Panc1 (cell line): ENCODE measurements at regions of chr2 and their contacts with region 1.

Region 1: DNA sequence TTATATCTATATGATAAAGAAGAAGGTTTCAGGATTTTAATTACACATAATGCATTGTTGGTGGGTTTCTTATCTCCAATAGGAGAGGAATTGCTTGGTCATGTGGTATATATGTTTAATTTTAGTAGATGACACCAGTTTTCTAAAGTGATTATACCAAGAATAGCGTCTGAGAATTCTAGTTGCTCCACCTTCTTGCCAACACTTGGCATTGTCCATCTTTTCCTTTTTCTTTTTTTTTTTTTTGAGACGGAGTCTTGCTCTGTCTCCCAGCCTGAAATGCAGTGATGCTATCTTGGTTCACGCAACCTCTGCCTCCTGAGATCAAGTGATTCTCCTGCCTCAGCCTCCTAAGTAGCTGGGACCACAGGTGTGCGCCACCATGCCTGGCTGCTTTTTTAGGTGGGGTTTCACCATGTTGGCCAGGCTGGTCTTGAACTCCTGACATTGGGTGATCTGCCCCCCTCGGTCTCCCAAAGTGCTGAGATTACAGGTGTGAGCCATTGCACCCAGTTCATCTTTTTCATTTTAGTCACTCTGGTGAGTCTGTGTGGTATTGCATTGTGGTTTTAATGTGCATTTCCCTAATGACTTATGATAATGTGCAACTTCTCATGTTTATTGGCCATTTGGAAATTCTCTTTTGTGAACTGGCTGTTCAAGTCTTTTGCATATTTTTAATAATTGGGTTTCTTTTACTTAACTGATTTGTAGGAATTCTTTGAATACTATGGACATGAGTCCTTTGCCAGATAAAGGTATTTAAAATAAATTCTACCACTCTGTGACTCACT is 37.3 kb upstream of the ZNF512 start:
- DNase-seq: no peak
- ATAC-seq: no peak
- H3K4me3 ChIP-seq: no peak overlapping the region
- H3K27ac ChIP-seq: no peak overlapping the region
- H3K4me1 ChIP-seq: no peaks in the 10 kb centered on the region
- H3K27me3 ChIP-seq: no peaks in the 10 kb centered on the region
- CTCF ChIP-seq: no peak

Region 2: DNA sequence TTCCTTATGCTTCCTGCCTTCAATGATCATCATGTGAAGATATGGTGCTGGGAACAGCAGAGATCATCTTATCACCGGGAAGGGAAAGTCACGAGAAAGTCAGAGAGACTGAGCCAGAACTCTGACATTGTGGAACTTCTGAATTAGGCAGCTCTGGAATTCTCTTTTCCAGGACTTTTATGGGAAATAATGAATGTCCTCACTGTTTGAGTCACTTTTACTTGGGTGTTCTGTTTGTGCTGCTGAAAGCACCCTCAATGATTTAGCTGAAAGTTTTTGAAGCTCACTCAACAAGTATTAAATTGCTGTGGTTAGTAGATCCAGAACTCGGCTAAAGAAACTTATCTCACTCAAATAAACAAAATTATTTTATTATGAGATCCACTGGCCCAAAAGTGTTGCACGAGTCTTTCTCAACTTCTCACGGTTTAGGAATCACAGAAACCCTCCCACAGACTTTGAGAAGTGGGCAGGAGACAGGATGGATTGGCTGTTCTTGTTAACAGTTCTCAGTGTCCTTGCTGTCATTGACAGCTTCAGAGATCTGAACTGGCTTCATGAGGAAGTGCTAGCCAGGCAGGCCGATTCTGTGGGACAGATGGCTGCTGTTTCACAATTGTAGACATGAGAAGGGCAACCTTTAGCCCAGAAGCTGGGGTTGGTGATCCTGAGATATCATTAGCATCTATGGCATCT is 360.1 kb before region 1 on chr2:
- CTCF ChIA-PET with region 1: no interaction called
- POLR2A ChIA-PET with region 1: no interaction called
- in situ Hi-C with region 1: no loop called
- intact Hi-C with region 1: no loop called
- DNase-seq: no peak
- ATAC-seq: no peak
- H3K4me3 ChIP-seq: no peak overlapping the region
- H3K27ac ChIP-seq: no peak overlapping the region
- H3K4me1 ChIP-seq: no peaks in the 10 kb centered on the region
- H3K27me3 ChIP-seq: no peaks in the 10 kb centered on the region
- CTCF ChIP-seq: no peak

Region 3: GRCh38 chr2:27501042-27501441 is 44.5 kb before region 1 on chr2:
- CTCF ChIA-PET with region 1: no interaction called
- POLR2A ChIA-PET with region 1: interaction called, 12 read pairs
- in situ Hi-C with region 1: no loop called
- intact Hi-C with region 1: no loop called
- DNase-seq: no peak
- ATAC-seq: no peak
- H3K4me3 ChIP-seq: no peak overlapping the region
- H3K27ac ChIP-seq: no peak overlapping the region
- H3K4me1 ChIP-seq: no peaks in the 10 kb centered on the region
- H3K27me3 ChIP-seq: peaks cover 20% of the 10 kb centered on the region; the same call in 1 of the 2 replicates
- CTCF ChIP-seq: no peak

Region 4: DNA sequence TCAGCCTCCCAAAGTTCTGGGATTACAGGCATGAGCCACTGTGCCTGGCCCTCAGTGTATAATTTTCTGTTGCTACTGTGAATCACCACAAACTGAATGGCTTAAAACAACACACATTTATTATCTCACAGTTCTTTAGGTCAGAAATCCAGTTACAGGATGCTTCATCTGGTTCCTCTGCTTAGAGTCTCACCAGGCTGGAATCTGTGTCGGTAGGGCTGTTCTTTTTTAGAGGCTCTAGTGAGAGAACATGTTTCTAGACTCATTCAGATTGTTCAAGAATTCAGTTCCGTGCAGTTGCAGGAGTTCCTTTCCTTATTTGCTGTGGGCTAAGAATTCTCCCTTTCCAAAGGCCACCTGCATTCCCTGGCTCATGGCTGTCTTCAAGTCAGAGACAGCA is 61.1 kb after region 1 on chr2:
- CTCF ChIA-PET with region 1: no interaction called
- POLR2A ChIA-PET with region 1: no interaction called
- in situ Hi-C with region 1: no loop called
- intact Hi-C with region 1: no loop called
- DNase-seq: no peak
- ATAC-seq: no peak
- H3K4me3 ChIP-seq: no peak overlapping the region
- H3K27ac ChIP-seq: no peak overlapping the region
- H3K4me1 ChIP-seq: no peaks in the 10 kb centered on the region
- H3K27me3 ChIP-seq: no peaks in the 10 kb centered on the region
- CTCF ChIP-seq: no peak

Region 5: GRCh38 chr2:28736034-28736433 is 1190.5 kb after region 1 on chr2:
- CTCF ChIA-PET with region 1: no interaction called
- POLR2A ChIA-PET with region 1: interaction called, 15 read pairs
- in situ Hi-C with region 1: no loop called
- intact Hi-C with region 1: no loop called
- DNase-seq: no peak
- ATAC-seq: 0 out of 2 replicates have a peak, but pooled peaks have one; percentile 34
- H3K4me3 ChIP-seq: no peak overlapping the region
- H3K27ac ChIP-seq: no peak overlapping the region
- H3K4me1 ChIP-seq: no peaks in the 10 kb centered on the region
- H3K27me3 ChIP-seq: no peaks in the 10 kb centered on the region
- CTCF ChIP-seq: no peak